ENCODE measurements at regions of chr7 and their contacts with region 1.

Region 1: DNA sequence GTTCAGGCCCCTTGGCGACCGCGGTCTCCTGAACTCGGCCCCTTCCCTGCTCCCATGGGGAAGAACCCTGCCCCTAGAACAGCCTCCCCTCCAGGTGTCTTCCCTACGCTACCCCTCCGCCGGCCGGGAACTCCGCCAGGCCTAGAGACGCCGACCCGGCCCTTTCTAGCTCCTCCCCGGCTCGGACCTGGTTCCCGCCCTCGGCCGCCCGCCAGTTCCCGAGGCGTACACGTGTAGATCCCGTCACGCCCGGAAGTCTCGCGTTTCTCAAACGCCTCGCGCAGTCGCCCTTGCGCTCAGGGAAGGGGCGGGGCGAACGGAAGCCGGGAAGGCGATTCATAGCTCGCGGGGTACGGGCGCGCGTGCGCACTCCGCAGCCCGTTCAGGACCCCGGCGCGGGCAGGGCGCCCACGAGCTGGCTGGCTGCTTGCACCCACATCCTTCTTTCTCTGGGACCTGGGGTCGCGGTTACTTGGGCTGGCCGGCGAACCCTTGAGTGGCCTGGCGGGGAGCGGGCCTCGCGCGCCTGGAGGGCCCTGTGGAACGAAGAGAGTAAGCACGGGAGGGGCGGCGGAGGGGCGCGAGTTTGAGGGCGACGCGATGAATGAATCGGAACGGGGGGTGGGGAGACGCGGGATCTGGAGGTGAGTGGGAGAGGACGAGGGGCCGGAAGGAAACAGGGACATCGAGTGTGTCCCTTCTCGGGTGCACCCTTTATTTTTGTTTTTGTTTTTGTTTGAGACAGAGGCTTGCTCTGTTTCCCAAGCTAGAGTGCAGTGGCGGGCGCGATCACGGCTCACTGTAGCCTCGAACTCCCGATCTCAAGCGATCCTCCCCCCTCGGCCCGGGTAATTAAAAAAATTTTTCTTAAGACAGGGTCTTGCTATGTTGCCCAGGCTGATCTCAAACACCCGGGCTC is at the start of gene POP7:
- DNase-seq: peak; percentile 99
- ATAC-seq: peak; percentile 97
- H3K4me3 Mint-ChIP-seq: peak within 1 kb of the TSS; percentile 96
- H3K27ac Mint-ChIP-seq: peak within 1 kb of the TSS; percentile 88
- H3K4me1 Mint-ChIP-seq: peaks cover 8% of the 10 kb centered on the region
- H3K27me3 Mint-ChIP-seq: no peaks in the 10 kb centered on the region
- CTCF ChIP-seq: no peak
- total RNA-seq, gene POP7: 71.9 to 79.2 TPM (median 78.1 TPM) in 3 replicates

Region 2: GRCh38 chr7:100546129-100546875 is 159.7 kb before region 1 on chr7:
- CTCF ChIA-PET with region 1: no interaction called
- POLR2A ChIA-PET with region 1: no interaction called
- DNase-seq: no peak
- ATAC-seq: no peak
- H3K4me3 Mint-ChIP-seq: no peak overlapping the region
- H3K27ac Mint-ChIP-seq: peak overlapping the region; percentile 38
- H3K4me1 Mint-ChIP-seq: peaks cover 61% of the 10 kb centered on the region
- H3K27me3 Mint-ChIP-seq: peaks cover 4% of the 10 kb centered on the region
- CTCF ChIP-seq: no peak

Region 3: DNA sequence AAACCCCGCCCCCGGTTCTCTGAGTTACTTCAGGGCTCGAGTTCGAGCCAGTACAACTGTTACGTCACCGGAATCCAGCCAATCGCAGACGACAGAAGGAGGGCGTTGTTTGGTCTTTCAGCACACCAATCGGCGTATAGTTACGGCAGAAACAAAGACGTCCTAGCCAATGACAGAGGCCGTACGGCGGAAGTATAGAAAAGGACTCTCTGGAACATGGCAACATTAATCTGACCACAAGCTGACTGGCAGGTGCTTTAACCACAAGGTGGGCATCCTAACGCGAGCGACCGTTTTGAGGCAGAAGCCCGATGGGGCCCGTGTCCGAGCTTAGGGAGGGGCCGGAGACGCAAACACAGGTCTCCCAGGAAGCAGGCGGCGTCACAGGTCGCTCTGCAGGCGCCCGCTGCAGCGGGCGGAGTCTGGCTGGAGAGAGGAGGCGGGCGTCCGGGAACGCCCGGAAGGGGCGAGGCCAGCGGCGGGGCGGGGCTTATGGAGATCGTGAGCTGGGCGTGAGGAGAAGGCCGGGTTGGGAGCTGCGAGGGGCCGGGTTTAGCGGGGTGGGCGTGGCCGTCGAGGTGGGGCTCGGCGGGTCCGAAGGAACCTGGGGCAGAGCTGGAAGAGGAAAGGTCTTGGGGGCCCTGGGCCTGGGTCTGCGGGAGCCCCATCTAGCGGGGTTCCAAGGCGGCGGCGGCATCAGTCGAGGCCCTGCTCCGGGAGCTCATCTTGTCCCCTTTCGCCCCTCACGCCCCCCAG is 93.9 kb before region 1 on chr7 and contains the start of gene MOSPD3:
- CTCF ChIA-PET with region 1: interaction called, 32 read pairs
- POLR2A ChIA-PET with region 1: interaction called, 8 read pairs
- DNase-seq: peak; percentile 99
- ATAC-seq: peak; percentile 93
- H3K4me3 Mint-ChIP-seq: peak within 1 kb of the TSS; percentile 94
- H3K27ac Mint-ChIP-seq: peak within 1 kb of the TSS; percentile 100
- H3K4me1 Mint-ChIP-seq: peaks cover 6% of the 10 kb centered on the region; the same call in 1 of the 2 replicates
- H3K27me3 Mint-ChIP-seq: no peaks in the 10 kb centered on the region; the same call in 1 of the 2 replicates
- CTCF ChIP-seq: no peak
- total RNA-seq, gene MOSPD3: 21.9 to 22.4 TPM (median 22.0 TPM) in 3 replicates

Region 4: DNA sequence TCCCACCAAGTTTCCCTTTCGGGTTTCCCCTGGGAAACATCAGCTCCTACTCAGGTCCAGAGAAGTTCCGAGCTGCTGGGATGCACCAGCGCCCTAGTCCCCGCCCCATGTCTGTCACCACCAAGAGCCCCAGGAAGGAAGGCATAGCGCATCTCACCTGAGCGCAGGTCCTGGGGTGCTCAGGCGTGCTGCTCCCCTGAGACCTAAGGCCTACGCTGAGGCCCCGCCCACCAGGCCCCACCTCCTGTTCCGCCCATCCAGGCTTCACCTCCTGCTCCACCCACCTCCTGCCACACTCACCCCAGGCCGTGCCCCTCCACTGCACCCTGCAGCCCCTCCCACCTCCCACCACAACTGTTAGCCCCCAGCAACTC is 63.5 kb before region 1 on chr7:
- CTCF ChIA-PET with region 1: interaction called, 11 read pairs
- POLR2A ChIA-PET with region 1: no interaction called
- DNase-seq: peak; percentile 80
- ATAC-seq: peak; percentile 90
- H3K4me3 Mint-ChIP-seq: no peak overlapping the region
- H3K27ac Mint-ChIP-seq: no peak overlapping the region
- H3K4me1 Mint-ChIP-seq: peaks cover 14% of the 10 kb centered on the region
- H3K27me3 Mint-ChIP-seq: peaks cover under 1% of the 10 kb centered on the region; the same call in 1 of the 2 replicates
- CTCF ChIP-seq: no peak

Region 5: GRCh38 chr7:100719523-100720319 is 13.7 kb after region 1 on chr7:
- CTCF ChIA-PET with region 1: interaction called, 119 read pairs
- POLR2A ChIA-PET with region 1: interaction called, 5 read pairs
- DNase-seq: no peak
- ATAC-seq: peak; percentile 17
- H3K4me3 Mint-ChIP-seq: peak overlapping the region; percentile 65
- H3K27ac Mint-ChIP-seq: no peak overlapping the region
- H3K4me1 Mint-ChIP-seq: peaks cover 4% of the 10 kb centered on the region
- H3K27me3 Mint-ChIP-seq: peaks cover 62% of the 10 kb centered on the region
- CTCF ChIP-seq: no peak

Region 6: GRCh38 chr7:100793806-100794660 is 88.0 kb after region 1 on chr7:
- CTCF ChIA-PET with region 1: interaction called, 58 read pairs
- POLR2A ChIA-PET with region 1: interaction called, 4 read pairs
- DNase-seq: no peak
- ATAC-seq: peak; percentile 36
- H3K4me3 Mint-ChIP-seq: peak overlapping the region; percentile 33; the same call in 1 of the 2 replicates
- H3K27ac Mint-ChIP-seq: no peak overlapping the region
- H3K4me1 Mint-ChIP-seq: peaks cover 15% of the 10 kb centered on the region
- H3K27me3 Mint-ChIP-seq: no peaks in the 10 kb centered on the region; the same call in 1 of the 2 replicates
- CTCF ChIP-seq: no peak

Region 7: DNA sequence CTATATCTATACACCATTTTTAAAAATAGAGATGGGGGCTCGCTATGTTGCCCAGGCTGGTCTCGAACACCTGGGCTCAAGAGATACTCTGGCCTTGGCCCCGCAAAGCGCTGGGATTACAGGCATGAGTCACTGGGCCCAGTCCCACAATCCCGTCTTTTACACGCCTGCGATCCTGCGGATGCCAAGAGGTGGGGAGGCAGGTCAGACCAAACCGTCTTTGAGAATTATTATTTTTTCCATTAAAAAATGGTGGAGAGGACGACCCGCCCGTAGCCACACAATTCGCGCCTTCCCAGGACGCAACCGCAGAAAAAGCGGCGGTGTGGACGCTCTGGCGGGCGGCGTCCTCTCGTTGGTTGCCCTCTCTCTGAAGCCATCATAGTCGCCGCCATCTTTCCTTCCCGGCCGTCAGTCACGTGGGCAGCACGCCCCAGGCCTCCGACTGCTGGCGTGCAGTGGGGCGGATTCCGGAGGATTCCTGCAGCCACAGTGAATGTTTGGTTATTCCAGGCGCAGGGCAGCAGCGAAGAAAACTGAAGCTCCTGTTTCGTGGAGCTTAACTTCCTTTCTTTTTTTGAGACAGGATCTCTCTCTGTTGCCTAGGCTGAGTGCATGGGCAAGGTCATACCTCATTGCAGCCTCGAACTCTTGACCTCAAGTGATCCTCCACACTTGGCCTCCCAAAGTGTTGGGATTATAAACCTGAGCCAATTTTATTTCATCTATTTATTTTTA is 131.3 kb after region 1 on chr7:
- CTCF ChIA-PET with region 1: interaction called, 12 read pairs
- POLR2A ChIA-PET with region 1: interaction called, 11 read pairs
- DNase-seq: peak; percentile 93
- ATAC-seq: peak; percentile 36
- H3K4me3 Mint-ChIP-seq: peak overlapping the region; percentile 77
- H3K27ac Mint-ChIP-seq: peak overlapping the region; percentile 100
- H3K4me1 Mint-ChIP-seq: peaks cover 37% of the 10 kb centered on the region
- H3K27me3 Mint-ChIP-seq: no peaks in the 10 kb centered on the region
- CTCF ChIP-seq: no peak